ENCODE measurements at regions of chr4 and their contacts with region 1.

Region 1: GRCh38 chr4:48779998-48780742 is at the start of gene FRYL:
- DNase-seq: peak; percentile 97 to 99 (median 98)
- H3K4me3 ChIP-seq: peak within 1 kb of the TSS; percentile 91
- H3K4me3 Mint-ChIP-seq: peak within 1 kb of the TSS; percentile 89 to 99 (median 91)
- H3K27ac ChIP-seq: peak within 1 kb of the TSS; percentile 82
- H3K27ac Mint-ChIP-seq: peak within 1 kb of the TSS; percentile 76 to 97 (median 90)
- H3K4me1 ChIP-seq: peaks cover 42% of the 10 kb centered on the region
- H3K4me1 Mint-ChIP-seq: peaks cover 38 to 51% (median 49%) of the 10 kb centered on the region in 3 donors
- H3K27me3 ChIP-seq: no peaks in the 10 kb centered on the region
- H3K27me3 Mint-ChIP-seq: no peaks in the 10 kb centered on the region
- total RNA-seq, gene FRYL: 69.3 to 70.3 TPM

Region 2: DNA sequence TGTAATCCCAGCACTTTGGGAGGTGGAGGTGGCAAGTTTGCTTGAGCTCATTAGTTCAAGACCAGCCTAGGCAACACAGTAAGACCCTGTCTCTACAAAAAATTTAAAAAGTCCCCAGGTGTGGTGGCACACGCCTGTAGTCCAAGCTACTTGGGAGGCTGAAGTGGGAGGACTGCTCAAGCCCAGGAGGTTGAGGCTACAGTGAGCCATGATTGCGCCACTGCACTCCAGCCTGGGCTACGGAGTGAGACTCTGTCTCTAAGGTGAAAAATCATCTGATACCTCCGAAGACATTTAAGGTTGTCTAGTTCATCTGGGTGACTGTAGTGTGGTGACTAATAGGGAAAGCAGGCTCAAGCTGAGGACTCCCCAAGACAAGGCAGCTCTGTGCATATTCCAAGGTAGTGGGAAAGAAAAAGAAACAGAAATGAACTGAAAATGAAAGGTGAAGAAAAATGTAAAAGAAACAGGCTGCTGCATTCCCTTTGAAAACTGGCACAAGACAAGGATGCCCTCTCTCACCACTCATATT is 23.4 kb before region 1 on chr4:
- CTCF ChIA-PET with region 1: no interaction called
- POLR2A ChIA-PET with region 1: no interaction called
- DNase-seq: no peak
- H3K4me3 ChIP-seq: no peak overlapping the region
- H3K4me3 Mint-ChIP-seq: no peak overlapping the region
- H3K27ac ChIP-seq: no peak overlapping the region
- H3K27ac Mint-ChIP-seq: peak overlapping the region in 1 of 8 donors; percentile 20
- H3K4me1 ChIP-seq: peaks cover 8% of the 10 kb centered on the region
- H3K4me1 Mint-ChIP-seq: peaks cover 50 to 72% (median 64%) of the 10 kb centered on the region in 3 donors
- H3K27me3 ChIP-seq: no peaks in the 10 kb centered on the region
- H3K27me3 Mint-ChIP-seq: no peaks in the 10 kb centered on the region

Region 3: DNA sequence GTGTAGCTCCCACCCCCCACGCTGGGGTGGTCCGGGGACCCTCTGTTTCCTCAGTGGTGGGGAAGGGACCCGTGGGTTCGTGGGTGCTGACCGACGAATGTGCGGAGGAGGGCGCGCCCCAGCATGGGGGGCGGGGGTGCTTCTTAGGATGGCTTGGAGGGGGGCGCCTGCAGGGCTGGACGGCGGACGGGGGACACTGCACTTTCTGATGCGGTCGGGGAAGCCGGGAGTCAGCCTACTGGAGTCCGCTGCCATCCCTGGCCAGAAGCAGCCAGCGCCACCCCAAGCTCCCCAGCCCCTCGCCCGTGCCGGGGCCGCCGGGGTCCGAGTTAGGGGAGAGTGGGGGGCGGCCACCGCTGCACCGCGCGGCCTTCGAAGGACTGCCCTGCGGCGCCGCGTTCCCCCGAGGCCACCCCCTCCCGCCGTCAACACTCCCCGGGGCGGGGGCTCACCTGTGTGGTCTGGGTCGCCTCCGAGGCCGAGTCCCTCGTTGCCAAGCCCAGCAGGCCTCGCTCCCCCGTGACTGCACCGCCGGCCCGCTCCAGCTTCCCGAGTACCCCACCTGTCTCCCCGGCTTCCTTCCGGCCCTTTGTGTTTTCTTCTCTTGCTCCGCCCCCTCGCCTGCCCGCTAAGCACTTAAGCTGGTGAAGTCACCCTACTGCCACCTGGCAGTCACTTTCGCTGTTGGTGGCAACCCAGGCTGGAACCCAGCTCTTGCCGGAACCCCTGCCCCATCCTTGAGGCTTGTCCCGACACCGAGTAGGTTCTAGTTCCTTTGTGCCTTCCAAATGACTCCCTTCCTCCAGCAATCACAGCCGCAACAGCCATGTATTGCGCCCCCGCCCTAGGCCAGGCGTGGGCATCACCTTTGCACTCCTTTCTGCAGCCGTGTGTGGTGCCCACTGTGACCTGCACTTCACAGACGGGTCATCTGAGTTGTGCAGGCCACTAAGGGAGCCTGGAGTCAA is 126.3 kb after region 1 on chr4 and contains the start of gene OCIAD2:
- CTCF ChIA-PET with region 1: interaction called, 6 read pairs
- POLR2A ChIA-PET with region 1: interaction called, 11 read pairs
- DNase-seq: peak; percentile 74 to 91 (median 80)
- H3K4me3 ChIP-seq: peak within 1 kb of the TSS; percentile 75
- H3K4me3 Mint-ChIP-seq: peak within 1 kb of the TSS; percentile 89 to 98 (median 93)
- H3K27ac ChIP-seq: peak within 1 kb of the TSS; percentile 57
- H3K27ac Mint-ChIP-seq: peak within 1 kb of the TSS; percentile 88 to 98 (median 94)
- H3K4me1 ChIP-seq: peaks cover 40% of the 10 kb centered on the region
- H3K4me1 Mint-ChIP-seq: peaks cover 31 to 47% (median 40%) of the 10 kb centered on the region in 3 donors
- H3K27me3 ChIP-seq: no peaks in the 10 kb centered on the region
- H3K27me3 Mint-ChIP-seq: no peaks in the 10 kb centered on the region
- total RNA-seq, gene OCIAD2: 55.7 to 60.0 TPM